Stomach (tissue), 19 donors: ENCODE measurements at regions of chr6 and their contacts with region 1.

Region 1: GRCh38 chr6:2952557-2953095 is 18.7 kb downstream of the SERPINB6 start:
- DNase-seq: peak; percentile 82 to 92
- H3K4me3 ChIP-seq: peak overlapping the region in 2 of 4 donors; percentile 3 to 13
- H3K27ac ChIP-seq: peak overlapping the region; percentile 24 to 80 (median 52)
- H3K4me1 ChIP-seq: peaks cover 11 to 33% (median 24%) of the 10 kb centered on the region in 4 donors
- H3K27me3 ChIP-seq: no peaks in the 10 kb centered on the region
- CTCF ChIP-seq: peak in 6 of 7 experiments; percentile 60 to 99 (median 95)
- EP300 ChIP-seq: no peak
- POLR2A ChIP-seq: no peak

Region 2: GRCh38 chr6:2441601-2442475 is 510.8 kb before region 1 on chr6:
- intact Hi-C with region 1: no loop called
- DNase-seq: no peak
- H3K4me3 ChIP-seq: no peak overlapping the region
- H3K27ac ChIP-seq: no peak overlapping the region
- H3K4me1 ChIP-seq: no peaks in the 10 kb centered on the region
- H3K27me3 ChIP-seq: no peaks in the 10 kb centered on the region
- CTCF ChIP-seq: no peak
- EP300 ChIP-seq: no peak
- POLR2A ChIP-seq: no peak

Region 3: DNA sequence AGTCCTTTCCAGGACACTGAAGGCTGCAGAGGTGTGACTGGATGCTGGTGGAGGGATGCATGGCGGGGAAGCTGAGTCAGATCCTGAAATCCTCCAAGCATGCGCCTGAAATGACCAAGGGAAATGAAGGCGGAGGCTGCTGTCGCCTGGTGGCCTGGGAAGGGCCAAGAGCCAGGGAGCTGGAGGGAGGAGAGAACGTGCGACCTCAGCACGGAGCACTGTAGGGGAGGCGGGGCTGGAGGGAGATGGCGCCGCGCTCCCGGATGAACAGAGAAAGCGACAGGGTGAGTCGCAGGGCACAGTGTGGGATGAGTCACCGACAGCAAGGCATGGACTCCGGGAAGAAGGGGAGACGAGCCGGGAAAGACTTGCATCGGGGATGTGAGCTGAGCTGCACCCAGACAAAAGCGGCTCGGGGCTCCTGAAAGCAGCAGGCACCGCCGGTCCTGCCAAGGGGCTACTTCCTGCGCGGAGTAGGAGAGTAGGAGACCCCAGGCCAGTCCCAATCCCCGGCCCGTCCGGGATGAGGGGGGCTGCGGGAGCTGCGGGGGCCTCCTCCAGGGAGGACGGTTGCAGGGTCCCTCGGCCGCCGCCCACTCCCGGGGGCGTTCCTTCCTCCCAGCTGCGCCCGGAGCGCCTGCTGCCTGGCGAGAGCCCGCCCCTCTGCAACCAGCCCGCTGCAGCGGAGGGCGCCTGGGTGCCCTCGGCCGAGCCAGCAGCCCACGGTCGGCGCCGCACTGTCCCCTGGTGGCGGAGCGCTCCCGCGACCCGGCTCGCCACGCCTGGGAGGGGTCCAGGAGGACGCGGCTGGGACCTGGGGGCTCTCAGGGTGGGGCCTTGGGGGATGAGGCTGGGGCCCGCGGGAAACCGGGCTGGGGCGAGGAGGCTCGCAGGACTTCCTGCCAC is 36.1 kb after region 1 on chr6:
- intact Hi-C with region 1: loop called (anchors 5 kb)
- DNase-seq: peak; percentile 88 to 96
- H3K4me3 ChIP-seq: peak overlapping the region; percentile 78 to 86 (median 84)
- H3K27ac ChIP-seq: peak overlapping the region; percentile 92 to 100 (median 98)
- H3K4me1 ChIP-seq: peaks cover 19 to 53% (median 41%) of the 10 kb centered on the region in 4 donors
- H3K27me3 ChIP-seq: no peaks in the 10 kb centered on the region
- CTCF ChIP-seq: peak in 5 of 7 experiments; percentile 61 to 92 (median 90)
- EP300 ChIP-seq: no peak
- POLR2A ChIP-seq: peak in 1 of 4 donors; percentile 12